ENCODE measurements at regions of chr5 and their contacts with region 1.

Region 1: DNA sequence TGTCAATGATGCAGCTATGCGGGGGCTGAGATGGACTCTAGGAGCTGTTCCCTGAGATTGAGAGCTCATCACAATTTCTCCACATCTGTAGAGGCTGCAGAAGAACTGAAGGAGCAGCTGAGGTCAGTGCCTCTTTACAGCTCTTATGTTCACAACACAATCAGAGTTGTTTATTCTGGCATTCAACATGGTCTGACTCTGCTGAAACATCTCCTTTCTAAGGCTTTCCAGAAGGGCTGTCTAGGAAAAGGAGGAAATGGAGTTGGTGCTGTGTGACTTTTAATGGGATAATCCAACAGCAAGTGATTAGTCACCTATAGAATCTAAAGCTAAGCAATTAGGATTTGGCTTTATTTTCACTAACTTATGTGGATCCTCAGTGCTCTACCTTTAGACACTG is 6.0 kb downstream of the POU5F2 start:
- DNase-seq: peak; percentile 59
- ATAC-seq: peak; percentile 66
- H3K4me3 ChIP-seq: no peak overlapping the region
- H3K27ac ChIP-seq: no peak overlapping the region
- H3K4me1 ChIP-seq: no peaks in the 10 kb centered on the region; the same call in 1 of the 2 replicates
- H3K27me3 ChIP-seq: no peaks in the 10 kb centered on the region
- CTCF ChIP-seq: no peak
- POLR2A ChIP-seq: no peak
- RAD21 ChIP-seq: no peak

Region 2: DNA sequence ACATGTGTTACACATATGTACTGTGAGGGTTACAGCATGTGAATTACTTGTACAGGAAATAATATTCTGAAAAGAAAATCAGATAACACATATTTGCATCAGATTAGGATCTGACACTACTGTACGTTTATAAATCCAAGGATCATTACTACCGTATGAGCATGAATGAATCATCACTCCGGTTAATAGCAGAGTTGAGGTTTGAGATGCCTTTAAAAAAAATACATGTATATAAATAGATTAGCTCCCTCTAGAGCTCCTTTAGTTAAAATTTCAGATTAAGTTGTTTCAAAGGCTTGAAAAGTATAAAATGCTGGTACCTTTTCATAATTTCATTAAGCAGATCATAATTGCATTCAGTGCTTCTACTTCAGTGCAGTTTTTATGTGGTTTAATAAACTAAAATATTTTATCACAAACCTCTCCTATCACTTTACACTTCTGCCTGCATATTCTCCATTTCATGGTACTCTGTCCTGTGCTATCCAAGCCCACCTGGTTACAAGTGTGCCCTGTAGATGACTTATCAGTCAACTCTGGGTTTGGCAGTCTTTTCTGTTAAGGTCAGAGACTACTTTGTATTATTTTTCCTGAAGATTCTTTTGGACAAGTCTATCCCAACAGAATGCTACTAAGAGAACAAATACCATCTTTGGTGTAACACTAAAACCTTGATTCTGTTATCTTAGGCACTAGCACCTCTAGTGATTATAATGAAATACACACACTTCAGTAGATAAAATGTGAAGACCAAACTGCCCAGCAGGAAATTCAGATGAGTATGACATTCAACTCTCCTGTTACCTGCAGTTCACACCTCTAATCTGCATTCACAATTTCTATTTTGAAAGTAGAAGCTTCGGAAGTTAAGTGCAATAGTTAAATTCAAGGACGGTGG is 54.0 kb after region 1 on chr5:
- CTCF ChIA-PET with region 1: no interaction called
- POLR2A ChIA-PET with region 1: no interaction called
- dilution Hi-C with region 1: no loop called
- in situ Hi-C with region 1: no loop called
- intact Hi-C with region 1: loop called (anchors 5 kb)
- DNase-seq: peak; percentile 88
- ATAC-seq: peak; percentile 76
- H3K4me3 ChIP-seq: no peak overlapping the region
- H3K27ac ChIP-seq: no peak overlapping the region
- H3K4me1 ChIP-seq: peaks cover 4% of the 10 kb centered on the region; the same call in 1 of the 2 replicates
- H3K27me3 ChIP-seq: no peaks in the 10 kb centered on the region
- CTCF ChIP-seq: peak; percentile 30; the same call in 1 of the 2 replicates
- POLR2A ChIP-seq: no peak
- RAD21 ChIP-seq: no peak; the same call in 1 of the 2 replicates